CD4-positive, alpha-beta T cell (primary cell): ENCODE measurements at regions of chr12 and their contacts with region 1.

Region 1: GRCh38 chr12:104215638-104216297 is at the start of gene TXNRD1:
- DNase-seq: peak; percentile 68 to 93 (median 82)
- ATAC-seq: peak; percentile 87
- H3K4me3 ChIP-seq: peak within 1 kb of the TSS; percentile 67
- H3K4me3 Mint-ChIP-seq: peak within 1 kb of the TSS; percentile 88
- H3K27ac ChIP-seq: no peak within 1 kb of the TSS
- H3K27ac Mint-ChIP-seq: peak within 1 kb of the TSS; percentile 20
- H3K4me1 ChIP-seq: peaks cover 18% of the 10 kb centered on the region
- H3K4me1 Mint-ChIP-seq: peaks cover 30% of the 10 kb centered on the region
- H3K27me3 ChIP-seq: no peaks in the 10 kb centered on the region
- H3K27me3 Mint-ChIP-seq: no peaks in the 10 kb centered on the region
- CTCF ChIP-seq: peak; percentile 91
- total RNA-seq, gene TXNRD1: 24.6 to 27.2 TPM

Region 2: GRCh38 chr12:104286538-104287482 is 71.0 kb after region 1 on chr12:
- CTCF ChIA-PET with region 1: interaction called, 12 read pairs
- POLR2A ChIA-PET with region 1: interaction called, 15 read pairs
- intact Hi-C with region 1: loop called (anchors 2 kb)
- DNase-seq: peak; percentile 70 to 96 (median 86)
- ATAC-seq: peak; percentile 84
- H3K4me3 ChIP-seq: peak overlapping the region; percentile 90
- H3K4me3 Mint-ChIP-seq: peak overlapping the region; percentile 98
- H3K27ac ChIP-seq: peak overlapping the region; percentile 67 to 84
- H3K27ac Mint-ChIP-seq: peak overlapping the region; percentile 96
- H3K4me1 ChIP-seq: peaks cover 35% of the 10 kb centered on the region
- H3K4me1 Mint-ChIP-seq: peaks cover 35% of the 10 kb centered on the region
- H3K27me3 ChIP-seq: peaks cover 0 to 7% of the 10 kb centered on the region in 2 experiments
- H3K27me3 Mint-ChIP-seq: no peaks in the 10 kb centered on the region
- CTCF ChIP-seq: no peak

Region 3: GRCh38 chr12:104303538-104304151 is 87.9 kb after region 1 on chr12 and contains the start of gene EID3:
- CTCF ChIA-PET with region 1: interaction called, 4 read pairs
- POLR2A ChIA-PET with region 1: interaction called, 8 read pairs
- intact Hi-C with region 1: loop called (anchors 5 kb)
- DNase-seq: peak; percentile 81 to 94 (median 90)
- ATAC-seq: peak; percentile 93
- H3K4me3 ChIP-seq: peak within 1 kb of the TSS; percentile 73
- H3K4me3 Mint-ChIP-seq: peak within 1 kb of the TSS; percentile 92
- H3K27ac ChIP-seq: peak within 1 kb of the TSS; percentile 75 to 84
- H3K27ac Mint-ChIP-seq: peak within 1 kb of the TSS; percentile 99
- H3K4me1 ChIP-seq: peaks cover 23% of the 10 kb centered on the region
- H3K4me1 Mint-ChIP-seq: peaks cover 68% of the 10 kb centered on the region
- H3K27me3 ChIP-seq: no peaks in the 10 kb centered on the region
- H3K27me3 Mint-ChIP-seq: no peaks in the 10 kb centered on the region
- CTCF ChIP-seq: no peak
- total RNA-seq, gene EID3: 13.5 to 14.3 TPM

Region 4: DNA sequence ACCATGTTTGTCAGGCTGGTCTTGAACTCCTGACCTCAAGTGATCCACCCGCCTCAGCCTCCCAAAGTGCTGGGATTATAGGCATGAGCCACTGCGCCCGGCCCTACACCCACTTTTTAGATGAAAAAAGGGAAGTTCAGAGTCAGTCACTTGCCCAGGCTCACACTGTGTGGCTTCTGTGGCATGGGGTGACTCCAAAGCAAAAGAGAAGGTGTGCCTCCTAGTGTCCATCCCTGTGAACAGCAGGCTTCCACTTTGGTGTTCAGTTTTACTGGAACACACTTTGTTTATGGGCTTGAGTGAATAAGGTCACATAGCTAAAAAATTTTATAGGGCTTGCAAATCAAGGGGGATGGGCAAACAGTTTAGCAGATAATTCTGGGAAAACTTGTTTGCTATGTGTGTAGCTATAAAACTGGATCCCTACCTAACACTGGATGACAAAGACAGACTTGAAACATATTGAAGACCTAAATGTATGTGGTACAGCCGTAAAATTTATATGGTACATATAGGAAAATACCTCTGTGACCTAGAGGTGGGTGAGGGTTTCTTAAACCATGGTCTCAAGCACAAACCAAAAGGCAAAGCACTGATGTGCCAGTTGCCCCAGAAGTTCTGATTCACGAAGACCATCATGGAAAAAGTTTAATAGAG is 142.7 kb after region 1 on chr12:
- CTCF ChIA-PET with region 1: interaction called, 3 read pairs
- POLR2A ChIA-PET with region 1: no interaction called
- intact Hi-C with region 1: loop called (anchors 1 kb)
- DNase-seq: peak; percentile 47 to 83 (median 58)
- ATAC-seq: peak; percentile 96
- H3K4me3 ChIP-seq: no peak overlapping the region
- H3K4me3 Mint-ChIP-seq: no peak overlapping the region
- H3K27ac ChIP-seq: no peak overlapping the region
- H3K27ac Mint-ChIP-seq: no peak overlapping the region
- H3K4me1 ChIP-seq: no peaks in the 10 kb centered on the region
- H3K4me1 Mint-ChIP-seq: no peaks in the 10 kb centered on the region
- H3K27me3 ChIP-seq: no peaks in the 10 kb centered on the region
- H3K27me3 Mint-ChIP-seq: no peaks in the 10 kb centered on the region
- CTCF ChIP-seq: peak; percentile 77

Region 5: DNA sequence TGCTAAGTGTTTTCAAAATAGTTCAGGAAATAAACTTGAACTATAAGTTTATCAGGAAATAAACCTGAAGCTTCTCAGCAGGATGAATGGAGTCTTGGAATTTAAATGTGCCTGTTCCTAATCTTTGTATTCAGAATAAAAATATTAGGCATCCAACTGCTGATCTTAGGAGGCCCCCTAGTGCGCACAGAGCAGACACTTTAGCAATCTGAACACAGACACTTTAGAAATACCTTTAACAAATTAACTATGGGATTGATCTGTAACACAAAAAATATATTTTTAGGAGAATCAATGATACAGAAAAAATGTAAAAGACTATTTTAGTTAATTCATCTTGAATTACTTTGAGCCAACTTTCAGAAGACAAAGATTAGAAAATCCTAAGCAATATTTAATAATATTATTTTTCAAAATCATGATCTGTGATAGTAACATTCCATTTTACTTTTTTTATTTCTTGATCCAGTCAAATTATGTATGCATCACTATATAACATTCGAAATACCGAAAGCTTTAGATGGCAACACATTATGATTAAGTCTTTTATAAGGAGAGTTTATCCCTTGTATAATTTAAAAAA is 661.4 kb after region 1 on chr12:
- CTCF ChIA-PET with region 1: no interaction called
- POLR2A ChIA-PET with region 1: no interaction called
- intact Hi-C with region 1: loop called (anchors 5 kb)
- DNase-seq: peak; percentile 14 to 61 (median 27)
- ATAC-seq: peak; percentile 56
- H3K4me3 ChIP-seq: no peak overlapping the region
- H3K4me3 Mint-ChIP-seq: no peak overlapping the region
- H3K27ac ChIP-seq: no peak overlapping the region
- H3K27ac Mint-ChIP-seq: no peak overlapping the region
- H3K4me1 ChIP-seq: no peaks in the 10 kb centered on the region
- H3K4me1 Mint-ChIP-seq: no peaks in the 10 kb centered on the region
- H3K27me3 ChIP-seq: no peaks in the 10 kb centered on the region
- H3K27me3 Mint-ChIP-seq: no peaks in the 10 kb centered on the region
- CTCF ChIP-seq: peak; percentile 86